ENCODE measurements at regions of chr6 and their contacts with region 1.

Region 1: GRCh38 chr6:31739639-31740396 is at the start of gene MSH5:
- DNase-seq: peak; percentile 99
- H3K4me3 Mint-ChIP-seq: peak within 1 kb of the TSS; percentile 94
- H3K27ac Mint-ChIP-seq: peak within 1 kb of the TSS; percentile 91
- H3K4me1 Mint-ChIP-seq: peaks cover 48% of the 10 kb centered on the region
- H3K27me3 Mint-ChIP-seq: no peaks in the 10 kb centered on the region
- total RNA-seq, gene MSH5: 80.9 to 83.8 TPM

Region 2: GRCh38 chr6:31546962-31547726 is 192.7 kb before region 1 on chr6 and contains the start of gene NFKBIL1:
- CTCF ChIA-PET with region 1: interaction called, 5 read pairs
- POLR2A ChIA-PET with region 1: interaction called, 5 read pairs
- intact Hi-C with region 1: loop called (anchors 5 kb)
- DNase-seq: peak; percentile 96
- H3K4me3 Mint-ChIP-seq: peak within 1 kb of the TSS; percentile 76
- H3K27ac Mint-ChIP-seq: peak within 1 kb of the TSS; percentile 89
- H3K4me1 Mint-ChIP-seq: peaks cover 44% of the 10 kb centered on the region
- H3K27me3 Mint-ChIP-seq: no peaks in the 10 kb centered on the region
- total RNA-seq, gene NFKBIL1: 18.5 to 21.5 TPM

Region 3: GRCh38 chr6:31665501-31666336 is 74.1 kb before region 1 on chr6 and contains the start of gene CSNK2B:
- CTCF ChIA-PET with region 1: interaction called, 3 read pairs
- POLR2A ChIA-PET with region 1: interaction called, 4 read pairs
- intact Hi-C with region 1: loop called (anchors 2 kb)
- DNase-seq: peak; percentile 99
- H3K4me3 Mint-ChIP-seq: peak within 1 kb of the TSS; percentile 88
- H3K27ac Mint-ChIP-seq: peak within 1 kb of the TSS; percentile 95
- H3K4me1 Mint-ChIP-seq: peaks cover 61% of the 10 kb centered on the region
- H3K27me3 Mint-ChIP-seq: no peaks in the 10 kb centered on the region
- total RNA-seq, gene CSNK2B: 227 to 234 TPM

Region 4: GRCh38 chr6:31729515-31729978 is 10.3 kb before region 1 on chr6:
- CTCF ChIA-PET with region 1: interaction called, 40 read pairs
- POLR2A ChIA-PET with region 1: interaction called, 11 read pairs
- intact Hi-C with region 1: no loop called
- DNase-seq: peak; percentile 84
- H3K4me3 Mint-ChIP-seq: peak overlapping the region; percentile 80
- H3K27ac Mint-ChIP-seq: peak overlapping the region; percentile 43
- H3K4me1 Mint-ChIP-seq: peaks cover 69% of the 10 kb centered on the region
- H3K27me3 Mint-ChIP-seq: no peaks in the 10 kb centered on the region

Region 5: DNA sequence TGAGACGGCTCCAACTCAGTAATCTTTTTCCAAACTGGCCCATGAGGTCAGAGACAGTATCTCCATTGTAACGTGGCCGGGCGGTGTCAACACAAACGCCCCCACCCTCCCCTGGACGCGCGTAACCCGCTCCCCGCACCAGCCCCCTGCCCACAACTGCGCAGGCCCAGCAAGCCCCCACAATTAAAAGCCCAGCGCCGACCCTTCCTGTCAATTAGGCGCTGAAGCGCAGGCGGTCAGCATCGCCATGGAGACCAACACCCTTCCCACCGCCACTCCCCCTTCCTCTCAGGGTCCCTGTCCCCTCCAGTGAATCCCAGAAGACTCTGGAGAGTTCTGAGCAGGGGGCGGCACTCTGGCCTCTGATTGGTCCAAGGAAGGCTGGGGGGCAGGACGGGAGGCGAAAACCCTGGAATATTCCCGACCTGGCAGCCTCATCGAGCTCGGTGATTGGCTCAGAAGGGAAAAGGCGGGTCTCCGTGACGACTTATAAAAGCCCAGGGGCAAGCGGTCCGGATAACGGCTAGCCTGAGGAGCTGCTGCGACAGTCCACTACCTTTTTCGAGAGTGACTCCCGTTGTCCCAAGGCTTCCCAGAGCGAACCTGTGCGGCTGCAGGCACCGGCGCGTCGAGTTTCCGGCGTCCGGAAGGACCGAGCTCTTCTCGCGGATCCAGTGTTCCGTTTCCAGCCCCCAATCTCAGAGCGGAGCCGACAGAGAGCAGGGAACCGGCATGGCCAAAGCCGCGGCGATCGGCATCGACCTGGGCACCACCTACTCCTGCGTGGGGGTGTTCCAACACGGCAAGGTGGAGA is 75.4 kb after region 1 on chr6 and contains the starts of genes HSPA1A and HSPA1L:
- CTCF ChIA-PET with region 1: interaction called, 14 read pairs
- POLR2A ChIA-PET with region 1: interaction called, 15 read pairs
- intact Hi-C with region 1: loop called (anchors 2 kb)
- DNase-seq: peak; percentile 82
- H3K4me3 Mint-ChIP-seq: peak within 1 kb of the TSS; percentile 85
- H3K27ac Mint-ChIP-seq: peak within 1 kb of the TSS; percentile 95
- H3K4me1 Mint-ChIP-seq: peaks cover 57% of the 10 kb centered on the region
- H3K27me3 Mint-ChIP-seq: no peaks in the 10 kb centered on the region
- total RNA-seq, gene HSPA1A: 68.5 to 69.9 TPM
- total RNA-seq, gene HSPA1L: 2.0 TPM

Region 6: DNA sequence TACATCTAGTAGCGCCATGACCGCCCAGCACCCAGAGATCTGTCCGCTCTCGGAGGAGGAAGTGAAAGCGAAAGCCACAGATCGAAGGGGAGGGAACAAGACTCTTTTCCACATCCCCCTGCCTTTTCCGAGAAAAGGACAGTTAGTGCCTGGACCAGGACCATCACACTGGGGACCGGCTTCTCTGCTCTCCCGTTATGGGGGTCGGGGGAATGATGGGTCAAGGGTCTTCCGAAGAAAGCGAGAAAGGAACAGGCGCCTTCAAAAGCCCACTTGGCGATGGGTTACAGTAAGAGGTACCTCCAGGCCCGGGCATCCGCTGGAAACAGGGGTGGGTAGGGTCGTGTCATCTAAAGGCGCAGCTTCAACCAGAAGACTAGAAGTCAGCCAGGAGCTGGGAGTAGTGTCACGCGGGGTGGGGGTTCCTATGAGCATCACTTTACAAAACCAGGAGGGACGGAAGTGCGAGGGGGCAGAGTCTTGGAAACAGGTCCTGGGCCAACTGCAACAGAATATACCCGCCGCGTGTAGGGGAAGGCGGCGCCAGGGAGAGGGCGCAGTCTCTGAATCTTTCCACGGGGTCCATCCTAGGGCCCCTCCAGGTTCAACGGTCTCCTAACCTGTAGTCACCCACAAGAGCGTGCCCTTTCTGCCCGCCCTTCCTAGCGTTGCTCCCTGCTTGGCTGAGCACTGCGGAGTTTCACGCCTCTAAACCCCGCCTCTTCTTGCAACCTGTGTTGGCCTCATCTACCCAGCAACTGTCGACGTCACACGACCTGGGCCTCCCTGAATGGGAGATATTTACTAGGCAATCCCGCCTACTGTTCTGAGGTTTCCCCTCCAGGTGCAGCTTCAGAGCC is 1104.4 kb after region 1 on chr6 and contains the start of gene PSMB8:
- CTCF ChIA-PET with region 1: no interaction called
- POLR2A ChIA-PET with region 1: interaction called, 3 read pairs
- intact Hi-C with region 1: loop called (anchors 5 kb)
- DNase-seq: peak; percentile 99
- H3K4me3 Mint-ChIP-seq: peak within 1 kb of the TSS; percentile 97
- H3K27ac Mint-ChIP-seq: peak within 1 kb of the TSS; percentile 100
- H3K4me1 Mint-ChIP-seq: peaks cover 63% of the 10 kb centered on the region
- H3K27me3 Mint-ChIP-seq: no peaks in the 10 kb centered on the region
- total RNA-seq, gene PSMB8: 350 to 370 TPM

Measured in activated CD4-positive, alpha-beta memory T cell treated with anti-CD3 and anti-CD28 coated beads for 36 hours (primary cell).